H1 (cell line): ENCODE measurements at regions of chr17 and their contacts with region 1.

Region 1: GRCh38 chr17:38578229-38579082 is 27.3 kb downstream of the SRCIN1 start:
- DNase-seq: no peak
- H3K4me3 ChIP-seq: peak overlapping the region; percentile 14 to 58 (median 41)
- H3K27ac ChIP-seq: no peak overlapping the region
- H3K4me1 ChIP-seq: peaks cover 7 to 26% (median 13%) of the 10 kb centered on the region in 4 experiments
- H3K27me3 ChIP-seq: peaks cover 49 to 77% (median 70%) of the 10 kb centered on the region in 4 experiments
- CTCF ChIP-seq: no peak
- EP300 ChIP-seq: no peak
- POLR2A ChIP-seq: no peak
- RAD21 ChIP-seq: no peak

Region 2: DNA sequence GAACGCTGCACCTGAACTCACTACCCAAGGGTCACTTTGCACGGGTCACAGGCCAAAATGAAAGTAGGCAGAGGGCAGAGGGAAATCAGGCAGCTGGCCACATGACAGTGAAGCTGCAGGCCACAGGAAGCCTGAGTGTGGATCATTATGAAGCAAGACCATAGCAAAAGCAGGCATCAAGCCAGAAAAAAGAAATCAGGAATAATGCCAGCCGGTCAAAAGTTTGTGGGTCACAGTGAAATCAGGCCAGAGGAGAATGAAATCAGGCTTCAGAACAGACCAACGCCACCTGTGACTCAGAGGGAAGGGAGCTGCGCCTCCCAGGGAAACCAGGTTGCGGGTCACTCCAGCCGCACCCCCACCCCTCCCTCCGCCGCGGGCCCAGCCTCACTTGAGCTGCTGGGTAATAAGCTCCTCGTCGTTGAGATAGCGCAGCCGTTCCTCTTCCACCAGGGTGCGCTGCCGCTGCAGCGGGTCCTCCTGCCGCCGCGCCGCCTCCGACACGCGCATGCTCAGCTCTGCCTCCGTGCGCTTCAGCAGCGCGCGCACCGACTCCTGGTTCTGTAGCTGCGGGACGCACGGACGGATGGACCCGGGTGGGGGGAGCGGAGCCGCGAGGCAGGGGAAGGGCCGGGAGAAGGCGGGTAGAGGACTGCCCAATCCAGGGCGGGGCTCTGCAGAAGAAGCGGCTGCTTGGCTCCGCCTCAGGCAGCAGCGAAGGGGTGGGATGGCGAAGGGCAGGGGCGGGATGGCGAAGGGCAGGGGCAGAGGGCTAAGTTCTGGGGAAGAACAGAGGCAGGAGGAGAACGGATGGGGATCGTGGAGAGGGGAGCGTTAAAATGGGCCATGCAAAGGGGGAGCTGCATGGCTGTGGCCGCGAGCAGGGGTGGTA is 20.4 kb before region 1 on chr17:
- CTCF ChIA-PET with region 1: interaction called, 914 read pairs
- POLR2A ChIA-PET with region 1: interaction called, 10 read pairs
- DNase-seq: peak; percentile 93 to 97
- H3K4me3 ChIP-seq: peak overlapping the region; percentile 37 to 69 (median 58); a peak in 7 of 8 replicates
- H3K27ac ChIP-seq: no peak overlapping the region
- H3K4me1 ChIP-seq: peaks cover 4 to 37% (median 27%) of the 10 kb centered on the region in 4 experiments
- H3K27me3 ChIP-seq: peaks cover 34 to 52% (median 48%) of the 10 kb centered on the region in 4 experiments
- CTCF ChIP-seq: peak; percentile 95 to 97 (median 96)
- EP300 ChIP-seq: 0 out of 3 replicates have a peak, but pooled peaks of 1 of the 2 experiments have one; percentile 58
- POLR2A ChIP-seq: no peak
- RAD21 ChIP-seq: peak; percentile 75 to 85

Region 3: GRCh38 chr17:38591759-38592241 is 13.3 kb after region 1 on chr17:
- CTCF ChIA-PET with region 1: interaction called, 403 read pairs
- POLR2A ChIA-PET with region 1: no interaction called
- DNase-seq: no peak
- H3K4me3 ChIP-seq: no peak overlapping the region
- H3K27ac ChIP-seq: no peak overlapping the region
- H3K4me1 ChIP-seq: peaks cover 0 to 35% (median 22%) of the 10 kb centered on the region in 4 experiments; a peak in 6 of 7 replicates
- H3K27me3 ChIP-seq: peaks cover 0 to 7% (median 0%) of the 10 kb centered on the region in 4 experiments; a peak in 3 of 7 replicates
- CTCF ChIP-seq: no peak
- EP300 ChIP-seq: no peak
- POLR2A ChIP-seq: no peak
- RAD21 ChIP-seq: no peak

Region 4: GRCh38 chr17:38598536-38598935 is 20.1 kb after region 1 on chr17:
- CTCF ChIA-PET with region 1: interaction called, 403 read pairs
- POLR2A ChIA-PET with region 1: interaction called, 5 read pairs
- DNase-seq: peak; percentile 88 to 93
- H3K4me3 ChIP-seq: no peak overlapping the region
- H3K27ac ChIP-seq: no peak overlapping the region
- H3K4me1 ChIP-seq: peaks cover 16 to 57% (median 51%) of the 10 kb centered on the region in 4 experiments
- H3K27me3 ChIP-seq: peaks cover 2 to 14% (median 13%) of the 10 kb centered on the region in 4 experiments
- CTCF ChIP-seq: no peak
- EP300 ChIP-seq: peak in 1 of 2 experiments; percentile 70; a peak in 1 of 3 replicates
- POLR2A ChIP-seq: no peak
- RAD21 ChIP-seq: peak in 1 of 2 experiments; percentile 18; a peak in 2 of 4 replicates

Region 5: DNA sequence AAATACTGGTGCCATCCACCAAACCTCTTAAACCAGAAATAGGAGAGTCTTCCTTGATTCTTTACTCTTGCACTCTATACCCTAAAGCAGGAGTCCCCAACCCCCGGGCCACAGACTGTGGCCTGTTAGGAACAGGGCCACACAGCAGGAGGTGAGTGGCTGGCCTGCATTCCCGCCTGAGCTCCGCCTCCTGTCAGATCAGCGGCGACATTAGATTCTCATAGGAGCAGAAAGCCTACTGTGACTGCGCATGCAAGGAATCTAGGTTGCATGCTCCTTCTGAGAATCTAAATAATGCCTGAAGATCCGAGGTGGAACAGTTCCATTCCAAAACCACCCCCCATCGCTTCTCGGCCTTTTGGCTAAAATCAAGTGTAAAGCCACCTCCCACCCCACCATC is 57.6 kb after region 1 on chr17:
- CTCF ChIA-PET with region 1: no interaction called
- POLR2A ChIA-PET with region 1: no interaction called
- DNase-seq: peak in 1 of 2 experiments; percentile 65
- H3K4me3 ChIP-seq: no peak overlapping the region
- H3K27ac ChIP-seq: no peak overlapping the region
- H3K4me1 ChIP-seq: peaks cover 0 to 3% (median 2%) of the 10 kb centered on the region in 4 experiments; a peak in 3 of 7 replicates
- H3K27me3 ChIP-seq: no peaks in the 10 kb centered on the region
- CTCF ChIP-seq: no peak
- EP300 ChIP-seq: no peak
- POLR2A ChIP-seq: no peak
- RAD21 ChIP-seq: no peak

Region 6: DNA sequence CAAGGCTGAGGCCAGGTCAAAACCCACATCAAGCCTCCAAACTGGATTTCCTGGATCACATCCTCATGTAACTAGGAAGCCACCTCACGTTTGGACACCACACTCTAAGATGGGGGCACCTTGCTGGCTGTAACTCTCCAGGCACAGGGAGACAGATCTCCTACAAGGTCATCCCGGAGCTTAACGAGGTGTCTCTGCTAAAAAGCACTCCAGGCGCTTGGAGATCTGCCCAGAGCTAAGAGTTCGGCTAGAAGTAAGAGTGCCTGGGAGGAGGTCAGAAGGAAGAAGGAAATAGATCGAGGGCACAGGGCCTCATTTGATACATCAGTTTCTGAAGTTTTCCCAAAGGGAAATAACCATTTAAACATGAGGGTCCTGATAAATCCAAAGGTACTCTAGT is 190.0 kb after region 1 on chr17:
- CTCF ChIA-PET with region 1: no interaction called
- POLR2A ChIA-PET with region 1: no interaction called
- DNase-seq: no peak
- H3K4me3 ChIP-seq: no peak overlapping the region
- H3K27ac ChIP-seq: no peak overlapping the region
- H3K4me1 ChIP-seq: no peaks in the 10 kb centered on the region
- H3K27me3 ChIP-seq: no peaks in the 10 kb centered on the region
- CTCF ChIP-seq: no peak
- EP300 ChIP-seq: no peak
- POLR2A ChIP-seq: no peak
- RAD21 ChIP-seq: no peak